Caco-2 (cell line): ENCODE measurements at regions of chr17 and their contacts with region 1.

Region 1: GRCh38 chr17:74961657-74962490 is 10.7 kb downstream of the HID1 start:
- DNase-seq: peak; percentile 90 to 93
- H3K4me3 ChIP-seq: no peak overlapping the region
- H3K4me3 Mint-ChIP-seq: no peak overlapping the region
- H3K27ac Mint-ChIP-seq: no peak overlapping the region
- H3K4me1 ChIP-seq: 0 out of 2 replicates have a peak, but pooled peaks cover 3% of the 10 kb centered on the region
- H3K4me1 Mint-ChIP-seq: peaks cover 21% of the 10 kb centered on the region
- H3K27me3 ChIP-seq: no peaks in the 10 kb centered on the region
- H3K27me3 Mint-ChIP-seq: no peaks in the 10 kb centered on the region
- CTCF ChIP-seq: peak; percentile 70 to 86

Region 2: GRCh38 chr17:74790161-74791054 is 171.5 kb before region 1 on chr17:
- CTCF ChIA-PET with region 1: no interaction called
- POLR2A ChIA-PET with region 1: no interaction called
- intact Hi-C with region 1: loop called (anchors 1 kb)
- DNase-seq: no peak
- H3K4me3 ChIP-seq: no peak overlapping the region
- H3K4me3 Mint-ChIP-seq: no peak overlapping the region
- H3K27ac Mint-ChIP-seq: no peak overlapping the region
- H3K4me1 ChIP-seq: no peaks in the 10 kb centered on the region
- H3K4me1 Mint-ChIP-seq: no peaks in the 10 kb centered on the region
- H3K27me3 ChIP-seq: no peaks in the 10 kb centered on the region
- H3K27me3 Mint-ChIP-seq: no peaks in the 10 kb centered on the region
- CTCF ChIP-seq: no peak

Region 3: DNA sequence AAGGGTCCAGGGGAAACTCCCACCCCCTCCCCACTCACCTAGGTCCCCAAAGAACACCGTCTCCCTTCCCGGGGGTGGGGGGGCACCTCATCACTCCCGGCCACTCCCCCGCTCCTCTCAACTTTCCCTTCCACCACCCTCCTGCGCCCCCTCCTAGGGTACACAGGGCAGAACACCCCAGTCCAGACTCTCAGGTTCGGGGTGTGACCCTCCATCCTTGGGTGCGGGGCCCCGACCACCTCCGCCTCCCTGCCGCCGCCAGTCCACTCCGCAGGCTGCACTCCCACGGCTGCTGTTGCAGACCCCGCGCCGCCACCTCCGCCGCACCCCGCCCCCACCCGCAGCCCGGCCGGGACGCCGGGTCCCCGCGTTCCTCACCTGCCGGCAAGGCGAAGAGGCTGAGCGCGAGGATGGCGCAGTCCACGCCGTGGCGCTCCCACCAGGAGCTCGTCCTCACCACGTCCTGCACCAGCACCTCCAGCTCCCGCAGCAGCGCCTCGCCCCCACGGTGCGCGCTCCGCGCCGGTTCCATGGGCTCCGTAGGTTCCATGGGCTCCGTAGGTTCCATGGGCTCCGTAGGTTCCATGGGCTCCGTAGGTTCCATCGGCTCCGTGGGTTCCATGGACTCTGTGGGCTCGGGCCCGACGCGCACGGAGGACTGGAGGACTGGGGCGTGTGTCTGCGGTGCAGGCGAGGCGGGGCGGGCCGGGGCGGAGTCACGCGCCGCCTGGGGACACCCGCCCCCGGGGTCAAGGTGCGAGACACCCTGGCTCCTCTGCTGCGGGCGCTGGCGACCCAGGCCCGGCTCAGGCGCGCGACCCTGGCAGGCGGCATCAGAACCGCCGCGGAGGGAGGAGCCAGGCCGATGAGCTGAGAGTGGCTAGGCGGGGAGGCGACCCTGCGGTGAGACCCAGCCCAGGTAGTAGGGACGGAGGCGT is 68.6 kb before region 1 on chr17 and contains the start of gene FADS6:
- CTCF ChIA-PET with region 1: interaction called, 10 read pairs
- POLR2A ChIA-PET with region 1: no interaction called
- intact Hi-C with region 1: no loop called
- DNase-seq: peak in 1 of 2 experiments; percentile 57
- H3K4me3 ChIP-seq: peak within 1 kb of the TSS; percentile 58
- H3K4me3 Mint-ChIP-seq: peak within 1 kb of the TSS; percentile 73
- H3K27ac Mint-ChIP-seq: no peak within 1 kb of the TSS
- H3K4me1 ChIP-seq: peaks cover 5% of the 10 kb centered on the region; the same call in 1 of the 2 replicates
- H3K4me1 Mint-ChIP-seq: peaks cover 9% of the 10 kb centered on the region
- H3K27me3 ChIP-seq: no peaks in the 10 kb centered on the region
- H3K27me3 Mint-ChIP-seq: peaks cover 6% of the 10 kb centered on the region
- CTCF ChIP-seq: no peak
- total RNA-seq, gene FADS6: 2.6 and 3.1 TPM in 2 replicates

Region 4: GRCh38 chr17:74972107-74972972 is 10.5 kb after region 1 on chr17 and contains the start of gene HID1:
- CTCF ChIA-PET with region 1: interaction called, 61 read pairs
- POLR2A ChIA-PET with region 1: interaction called, 3 read pairs
- intact Hi-C with region 1: no loop called
- DNase-seq: peak; percentile 75 to 87
- H3K4me3 ChIP-seq: peak within 1 kb of the TSS; percentile 90
- H3K4me3 Mint-ChIP-seq: peak within 1 kb of the TSS; percentile 84
- H3K27ac Mint-ChIP-seq: no peak within 1 kb of the TSS
- H3K4me1 ChIP-seq: peaks cover 36% of the 10 kb centered on the region
- H3K4me1 Mint-ChIP-seq: peaks cover 28% of the 10 kb centered on the region
- H3K27me3 ChIP-seq: no peaks in the 10 kb centered on the region
- H3K27me3 Mint-ChIP-seq: peaks cover 2% of the 10 kb centered on the region
- CTCF ChIP-seq: no peak
- total RNA-seq, gene HID1: 29.8 and 30.4 TPM in 2 replicates

Region 5: DNA sequence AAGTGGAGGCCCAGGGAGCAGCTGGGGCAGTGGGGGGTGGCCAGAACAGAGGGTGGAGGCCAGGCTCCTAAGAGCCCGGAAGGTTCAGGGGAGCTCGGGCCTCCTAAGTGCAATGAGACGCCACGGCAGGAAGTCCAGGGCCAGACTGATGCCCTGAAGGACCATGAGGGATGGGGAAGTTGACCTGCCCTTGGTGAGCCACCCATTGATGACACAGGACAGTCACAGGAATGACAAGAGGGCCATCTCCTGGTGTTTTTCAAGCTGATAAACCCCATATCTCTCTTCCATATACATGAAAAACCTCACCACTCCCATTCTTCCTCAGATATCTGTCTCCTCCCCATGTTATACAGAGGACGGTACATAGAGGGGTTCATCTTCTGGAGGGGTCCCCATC is 44.8 kb after region 1 on chr17:
- CTCF ChIA-PET with region 1: interaction called, 86 read pairs
- POLR2A ChIA-PET with region 1: no interaction called
- intact Hi-C with region 1: loop called (anchors 1 kb)
- DNase-seq: peak in 1 of 2 experiments; percentile 46
- H3K4me3 ChIP-seq: no peak overlapping the region
- H3K4me3 Mint-ChIP-seq: no peak overlapping the region
- H3K27ac Mint-ChIP-seq: no peak overlapping the region
- H3K4me1 ChIP-seq: peaks cover 3% of the 10 kb centered on the region; the same call in 1 of the 2 replicates
- H3K4me1 Mint-ChIP-seq: no peaks in the 10 kb centered on the region
- H3K27me3 ChIP-seq: no peaks in the 10 kb centered on the region
- H3K27me3 Mint-ChIP-seq: no peaks in the 10 kb centered on the region
- CTCF ChIP-seq: peak in 1 of 2 experiments; percentile 33

Region 6: DNA sequence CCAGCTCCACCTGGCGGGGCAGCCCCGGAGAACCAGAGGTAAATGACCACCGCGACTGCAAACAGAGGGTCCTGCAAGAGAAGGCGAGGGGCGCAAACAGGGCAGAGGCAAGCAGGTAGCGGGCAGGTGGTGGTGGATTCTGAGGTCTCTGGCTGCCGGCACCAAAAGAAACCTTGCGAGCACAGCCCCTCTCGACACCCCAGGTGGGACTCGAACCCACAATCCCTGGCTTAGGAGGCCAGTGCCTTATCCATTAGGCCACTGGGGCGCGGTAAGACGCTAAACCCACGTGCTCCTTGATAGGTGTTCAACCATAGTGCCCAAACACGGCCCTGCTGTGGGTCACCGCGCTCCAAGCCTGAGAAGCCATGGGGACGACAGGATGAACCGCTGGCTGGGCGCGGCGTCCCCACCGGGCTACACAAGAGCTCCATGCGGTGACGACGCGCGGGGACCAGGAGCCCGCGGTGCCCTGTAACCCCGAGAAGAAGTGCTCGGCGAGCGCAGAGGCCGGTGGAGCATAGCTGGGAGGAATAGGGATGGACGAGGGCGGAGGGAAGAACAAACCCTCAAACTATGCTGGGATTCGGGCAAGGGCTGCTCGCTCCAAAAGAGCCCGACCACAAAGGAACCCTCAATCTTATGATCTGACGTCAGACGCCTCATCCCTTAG is 72.5 kb after region 1 on chr17:
- CTCF ChIA-PET with region 1: interaction called, 31 read pairs
- POLR2A ChIA-PET with region 1: interaction called, 4 read pairs
- intact Hi-C with region 1: loop called (anchors 1 kb)
- DNase-seq: peak; percentile 95 to 96
- H3K4me3 ChIP-seq: peak overlapping the region; percentile 91
- H3K4me3 Mint-ChIP-seq: peak overlapping the region; percentile 94
- H3K27ac Mint-ChIP-seq: peak overlapping the region; percentile 98
- H3K4me1 ChIP-seq: no peaks in the 10 kb centered on the region
- H3K4me1 Mint-ChIP-seq: peaks cover 30% of the 10 kb centered on the region
- H3K27me3 ChIP-seq: no peaks in the 10 kb centered on the region
- H3K27me3 Mint-ChIP-seq: peaks cover 4% of the 10 kb centered on the region
- CTCF ChIP-seq: peak; percentile 14 to 17